ENCODE measurements at regions of chr13 and their contacts with region 1.

Region 1: GRCh38 chr13:110298505-110299282 is 8.3 kb downstream of the COL4A1 start:
- DNase-seq: no peak
- H3K4me3 ChIP-seq: peak overlapping the region; percentile 30 to 42
- H3K27ac ChIP-seq: peak overlapping the region; percentile 96 to 99
- H3K4me1 ChIP-seq: peaks cover 9 to 100% (median 71%) of the 10 kb centered on the region in 4 donors
- H3K27me3 ChIP-seq: no peaks in the 10 kb centered on the region
- CTCF ChIP-seq: no peak

Region 2: GRCh38 chr13:110262508-110263291 is 36.0 kb before region 1 on chr13:
- intact Hi-C with region 1: loop called (anchors 5 kb)
- DNase-seq: no peak
- H3K4me3 ChIP-seq: peak overlapping the region in 1 of 2 donors; percentile 16
- H3K27ac ChIP-seq: peak overlapping the region; percentile 74 to 79
- H3K4me1 ChIP-seq: peaks cover 0 to 97% (median 68%) of the 10 kb centered on the region in 4 donors
- H3K27me3 ChIP-seq: no peaks in the 10 kb centered on the region
- CTCF ChIP-seq: no peak

Measured in tibial artery (tissue), 4 donors.